Colonic mucosa (tissue), 4 donors: ENCODE measurements at regions of chr6 and their contacts with region 1.

Region 1: GRCh38 chr6:146857180-146857979 is 258.6 kb downstream of the ADGB start:
- DNase-seq: peak; percentile 81
- H3K4me3 ChIP-seq: peak overlapping the region; percentile 22
- H3K27ac ChIP-seq: peak overlapping the region; percentile 19
- H3K4me1 ChIP-seq: no peaks in the 10 kb centered on the region
- H3K27me3 ChIP-seq: no peaks in the 10 kb centered on the region
- CTCF ChIP-seq: peak; percentile 99

Region 2: GRCh38 chr6:146968041-146968760 is 110.8 kb after region 1 on chr6:
- intact Hi-C with region 1: no loop called
- DNase-seq: no peak
- H3K4me3 ChIP-seq: no peak overlapping the region
- H3K27ac ChIP-seq: no peak overlapping the region
- H3K4me1 ChIP-seq: no peaks in the 10 kb centered on the region
- H3K27me3 ChIP-seq: no peaks in the 10 kb centered on the region
- CTCF ChIP-seq: no peak

Region 3: DNA sequence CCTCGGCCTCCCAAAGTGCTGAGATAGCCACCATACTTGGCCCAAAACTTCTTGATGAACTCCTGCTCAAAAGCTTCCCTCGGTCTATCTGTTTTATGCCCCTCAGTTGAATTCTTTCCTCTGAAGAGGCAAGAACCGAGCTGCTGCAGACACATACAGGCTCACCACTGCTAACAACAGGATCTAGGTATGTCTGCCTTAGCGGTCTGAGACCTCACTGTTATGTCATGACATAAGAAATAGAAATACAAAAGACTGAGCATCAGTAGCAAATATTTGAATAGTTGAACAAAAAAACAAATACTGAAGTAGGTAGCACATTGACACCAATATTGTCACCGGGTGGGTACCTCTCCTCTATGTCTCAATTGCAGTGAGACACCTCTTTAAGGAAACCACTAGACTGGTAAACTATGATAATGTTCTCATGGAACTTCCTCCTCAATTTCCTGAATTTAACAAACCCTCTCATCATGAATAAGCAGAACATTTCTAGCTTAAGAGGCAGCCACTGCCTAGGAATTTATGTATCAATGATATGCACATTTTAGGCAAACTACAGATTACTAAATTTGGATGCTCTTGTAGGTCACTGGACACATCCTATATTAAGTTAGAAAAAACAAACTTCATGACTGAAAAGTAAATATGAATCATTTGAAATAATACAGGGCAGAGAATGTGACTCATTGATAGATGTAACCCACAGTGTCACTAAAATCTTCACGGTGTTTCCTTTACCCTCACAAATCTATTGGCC is 337.5 kb after region 1 on chr6:
- intact Hi-C with region 1: loop called (anchors 10 kb)
- DNase-seq: no peak
- H3K4me3 ChIP-seq: no peak overlapping the region
- H3K27ac ChIP-seq: no peak overlapping the region
- H3K4me1 ChIP-seq: no peaks in the 10 kb centered on the region
- H3K27me3 ChIP-seq: no peaks in the 10 kb centered on the region
- CTCF ChIP-seq: no peak

Region 4: GRCh38 chr6:147285087-147285855 is 427.9 kb after region 1 on chr6:
- intact Hi-C with region 1: loop called (anchors 5 kb)
- DNase-seq: no peak
- H3K4me3 ChIP-seq: no peak overlapping the region
- H3K27ac ChIP-seq: no peak overlapping the region
- H3K4me1 ChIP-seq: peaks cover 4% of the 10 kb centered on the region
- H3K27me3 ChIP-seq: no peaks in the 10 kb centered on the region
- CTCF ChIP-seq: peak; percentile 31